HepG2 (cell line): ENCODE measurements at regions of chr2 and their contacts with region 1.

Region 1: GRCh38 chr2:98568881-98569793 is 39.2 kb downstream of the COA5 start:
- DNase-seq: peak; percentile 41
- ATAC-seq: peak; percentile 89
- H3K4me3 ChIP-seq: no peak overlapping the region
- H3K27ac ChIP-seq: no peak overlapping the region
- H3K4me1 ChIP-seq: no peaks in the 10 kb centered on the region
- H3K27me3 ChIP-seq: no peaks in the 10 kb centered on the region
- CTCF ChIP-seq: peak; percentile 96
- EP300 ChIP-seq: no peak
- POLR2A ChIP-seq: no peak
- RAD21 ChIP-seq: peak; percentile 92

Region 2: GRCh38 chr2:98583816-98584618 is 14.9 kb after region 1 on chr2:
- CTCF ChIA-PET with region 1: no interaction called
- POLR2A ChIA-PET with region 1: no interaction called
- in situ Hi-C with region 1: no loop called
- intact Hi-C with region 1: loop called (anchors 1 kb)
- DNase-seq: peak; percentile 96
- ATAC-seq: peak; percentile 98
- H3K4me3 ChIP-seq: peak overlapping the region in 1 of 3 experiments; percentile 32; a peak in 2 of 6 replicates
- H3K27ac ChIP-seq: peak overlapping the region; percentile 83
- H3K4me1 ChIP-seq: peaks cover 19% of the 10 kb centered on the region
- H3K27me3 ChIP-seq: no peaks in the 10 kb centered on the region
- CTCF ChIP-seq: no peak; the same call in 1 of the 2 replicates
- EP300 ChIP-seq: 0 out of 4 replicates have a peak, but pooled peaks of 1 of the 2 experiments have one; percentile 57
- POLR2A ChIP-seq: peak; percentile 56 to 71
- RAD21 ChIP-seq: peak; percentile 40

Region 3: GRCh38 chr2:98601532-98602132 is 32.5 kb after region 1 on chr2:
- CTCF ChIA-PET with region 1: interaction called, 32 read pairs
- POLR2A ChIA-PET with region 1: no interaction called
- in situ Hi-C with region 1: loop called (anchors 5 kb)
- intact Hi-C with region 1: loop called (anchors 1 kb)
- DNase-seq: peak; percentile 69
- ATAC-seq: peak; percentile 99
- H3K4me3 ChIP-seq: no peak overlapping the region
- H3K27ac ChIP-seq: no peak overlapping the region
- H3K4me1 ChIP-seq: peaks cover 9% of the 10 kb centered on the region
- H3K27me3 ChIP-seq: no peaks in the 10 kb centered on the region
- CTCF ChIP-seq: peak; percentile 97
- EP300 ChIP-seq: no peak
- POLR2A ChIP-seq: 0 out of 4 replicates have a peak, but pooled peaks of 1 of the 2 experiments have one; percentile 12
- RAD21 ChIP-seq: peak; percentile 92

Region 4: DNA sequence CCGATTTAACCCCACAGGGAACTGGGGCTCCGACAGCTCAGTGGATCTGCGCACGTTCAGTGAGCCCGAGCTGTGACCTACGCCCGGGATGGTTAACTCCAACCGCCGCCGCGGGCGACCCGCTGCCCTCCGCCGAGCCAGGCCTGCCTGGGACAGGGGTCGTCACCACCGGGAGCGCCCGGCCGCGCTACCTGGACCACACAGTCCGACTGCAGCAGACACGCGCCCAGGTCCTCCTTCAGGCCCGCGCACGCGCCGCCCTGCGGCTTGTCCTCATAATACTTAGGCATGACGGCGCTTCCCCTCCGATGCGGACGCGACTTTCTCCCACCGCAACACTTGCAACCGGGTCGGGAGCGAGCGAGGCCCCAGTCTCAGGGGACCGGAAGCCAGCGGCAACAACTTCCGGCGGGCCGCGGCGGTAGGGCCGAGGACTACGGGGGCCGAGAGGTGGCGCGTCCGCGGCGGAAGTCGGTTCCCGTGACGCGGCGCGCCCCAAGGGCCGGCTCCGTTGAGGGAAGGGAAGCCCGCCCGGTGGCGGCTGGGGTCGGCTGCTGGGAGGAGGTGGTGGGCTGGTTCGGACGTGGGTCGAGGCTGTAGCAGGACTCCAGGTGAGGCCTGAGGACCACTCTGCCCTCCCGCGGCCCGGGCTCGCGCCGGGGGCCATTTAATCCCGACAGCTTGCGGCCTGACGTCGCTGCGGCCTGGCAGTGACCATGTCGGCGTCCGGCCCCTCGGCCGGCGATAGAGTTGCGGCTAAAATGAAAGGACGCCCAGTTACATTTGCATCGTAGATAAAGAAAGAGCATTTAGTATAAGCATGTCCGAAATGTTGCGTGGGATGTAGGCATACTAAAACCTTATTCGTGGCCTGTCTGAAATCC is 39.2 kb after region 1 on chr2 and contains the starts of genes COA5 and UNC50:
- CTCF ChIA-PET with region 1: no interaction called
- POLR2A ChIA-PET with region 1: no interaction called
- in situ Hi-C with region 1: loop called (anchors 5 kb)
- intact Hi-C with region 1: loop called (anchors 2 kb)
- DNase-seq: peak; percentile 86
- ATAC-seq: peak; percentile 95
- H3K4me3 ChIP-seq: peak within 1 kb of the TSS; percentile 95 to 98 (median 97)
- H3K27ac ChIP-seq: peak within 1 kb of the TSS; percentile 88
- H3K4me1 ChIP-seq: peaks cover 41% of the 10 kb centered on the region
- H3K27me3 ChIP-seq: no peaks in the 10 kb centered on the region; a peak in 1 of 5 replicates
- CTCF ChIP-seq: peak; percentile 42; the same call in 1 of the 2 replicates
- EP300 ChIP-seq: peak; percentile 48 to 51; a peak in 1 of 4 replicates
- POLR2A ChIP-seq: peak; percentile 92 to 97
- RAD21 ChIP-seq: peak; percentile 52
- total RNA-seq, gene COA5: 64.5 and 72.9 TPM in 2 replicates
- total RNA-seq, gene UNC50: 58.0 and 95.6 TPM in 2 replicates